A673 (cell line): ENCODE measurements at regions of chr19 and their contacts with region 1.

Region 1: DNA sequence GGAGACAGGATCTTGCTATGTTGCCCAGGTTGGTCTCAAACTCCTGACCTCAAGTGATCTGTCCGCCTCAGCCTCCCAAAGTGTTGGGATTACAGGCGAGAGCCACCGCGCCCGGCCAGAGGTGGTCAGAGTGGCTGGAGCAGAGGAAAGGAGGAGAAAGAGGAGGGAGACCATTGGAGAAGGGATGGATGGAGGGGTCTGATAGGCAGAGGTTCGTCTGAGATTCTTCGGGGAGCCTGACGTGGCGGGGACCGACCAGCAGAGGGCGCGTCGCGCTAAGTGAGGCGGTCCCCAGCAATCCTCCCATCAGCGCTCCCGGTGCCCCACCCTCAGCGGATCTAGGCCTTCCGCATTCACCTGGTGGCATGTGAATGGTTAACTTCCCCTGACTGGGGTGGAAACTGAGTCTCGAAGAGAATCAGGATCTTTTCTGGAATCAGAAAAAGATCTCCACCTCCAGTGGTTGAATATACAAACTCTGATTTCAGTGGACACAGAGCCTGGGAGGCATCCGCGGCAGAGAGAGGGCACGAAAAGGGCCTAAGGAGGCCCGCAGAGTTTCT is 8.8 kb downstream of the GTPBP3 start:
- DNase-seq: peak; percentile 77
- H3K4me3 ChIP-seq: no peak overlapping the region
- H3K27ac ChIP-seq: no peak overlapping the region
- H3K4me1 ChIP-seq: no peaks in the 10 kb centered on the region
- H3K27me3 ChIP-seq: no peaks in the 10 kb centered on the region
- CTCF ChIP-seq: peak; percentile 92

Region 2: GRCh38 chr19:17333739-17334413 is 12.3 kb before region 1 on chr19:
- CTCF ChIA-PET with region 1: interaction called, 3 read pairs
- POLR2A ChIA-PET with region 1: interaction called, 24 read pairs
- intact Hi-C with region 1: no loop called
- DNase-seq: peak; percentile 76
- H3K4me3 ChIP-seq: peak overlapping the region; percentile 91
- H3K27ac ChIP-seq: peak overlapping the region; percentile 90
- H3K4me1 ChIP-seq: peaks cover 8% of the 10 kb centered on the region
- H3K27me3 ChIP-seq: no peaks in the 10 kb centered on the region
- CTCF ChIP-seq: no peak

Region 3: GRCh38 chr19:17469481-17470067 is 123.4 kb after region 1 on chr19:
- CTCF ChIA-PET with region 1: no interaction called
- POLR2A ChIA-PET with region 1: no interaction called
- intact Hi-C with region 1: loop called (anchors 5 kb)
- DNase-seq: peak; percentile 97
- H3K4me3 ChIP-seq: peak overlapping the region; percentile 84
- H3K27ac ChIP-seq: peak overlapping the region; percentile 63
- H3K4me1 ChIP-seq: peaks cover 8% of the 10 kb centered on the region
- H3K27me3 ChIP-seq: no peaks in the 10 kb centered on the region
- CTCF ChIP-seq: no peak

Region 4: DNA sequence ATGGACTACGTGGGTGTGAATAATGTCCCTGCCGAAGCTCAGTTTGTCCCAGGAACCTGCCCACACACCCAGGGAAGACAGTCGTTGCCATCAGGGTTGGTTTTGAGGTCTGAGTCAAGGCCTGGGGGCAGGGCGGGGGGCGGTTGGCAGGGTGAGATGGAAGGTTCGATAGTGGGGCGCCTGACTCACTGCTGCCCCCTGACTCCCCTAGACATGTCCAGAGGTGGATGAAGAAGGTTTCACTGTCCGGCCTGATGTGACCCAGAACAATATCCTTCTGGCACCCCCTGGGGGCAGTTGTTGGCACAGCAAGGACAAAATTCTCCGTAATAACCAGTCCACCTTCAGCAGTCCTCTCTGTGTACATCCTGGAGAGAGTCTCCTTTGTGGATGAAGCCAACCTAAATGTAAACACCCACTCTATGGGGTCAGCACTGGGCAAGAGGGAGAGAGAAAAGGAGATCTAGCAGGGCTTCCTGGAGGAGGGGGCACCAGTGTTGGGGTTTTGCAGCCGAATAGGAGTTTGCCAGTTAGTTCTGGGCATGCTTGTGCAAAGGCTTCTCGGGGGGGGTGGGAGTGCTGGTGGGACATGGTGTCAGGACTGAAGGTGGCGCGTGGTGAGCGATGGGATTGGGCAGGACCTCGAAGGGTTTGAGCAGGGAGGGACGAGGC is 429.2 kb after region 1 on chr19:
- CTCF ChIA-PET with region 1: interaction called, 12 read pairs
- POLR2A ChIA-PET with region 1: no interaction called
- intact Hi-C with region 1: no loop called
- DNase-seq: no peak
- H3K4me3 ChIP-seq: no peak overlapping the region
- H3K27ac ChIP-seq: no peak overlapping the region
- H3K4me1 ChIP-seq: peaks cover 8% of the 10 kb centered on the region
- H3K27me3 ChIP-seq: no peaks in the 10 kb centered on the region
- CTCF ChIP-seq: peak; percentile 61